Aorta (tissue), 5 donors: ENCODE measurements at regions of chr6 and their contacts with region 1.

Region 1: DNA sequence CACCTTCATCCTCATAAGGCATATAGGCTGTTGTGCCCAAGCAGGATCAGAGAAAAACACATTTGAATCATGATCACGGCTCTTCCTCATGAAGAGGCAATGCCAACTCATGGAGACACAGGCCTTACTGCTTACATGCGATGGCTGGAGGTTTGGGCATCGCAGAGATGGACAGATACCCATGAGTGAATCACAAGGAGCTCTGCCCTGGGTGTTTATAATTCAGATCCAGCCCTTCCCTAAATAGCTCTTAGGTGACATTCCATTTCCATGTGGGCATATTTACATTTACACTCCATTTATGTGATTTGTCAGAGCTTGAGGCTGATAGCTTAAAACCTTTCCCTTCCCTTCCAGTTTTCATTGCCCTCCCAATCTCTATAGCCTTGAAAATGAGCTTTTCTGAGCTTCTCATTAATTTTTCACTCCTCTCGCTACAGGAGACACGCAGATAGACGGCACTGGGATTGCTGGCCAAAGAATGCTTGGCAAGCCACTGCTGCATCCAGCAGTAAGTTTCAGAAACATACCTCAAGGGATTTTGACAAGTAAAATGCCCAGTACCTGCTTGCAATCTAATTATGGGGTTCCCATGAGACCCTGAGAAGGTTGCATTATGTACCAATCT is 249.1 kb downstream of the TBC1D7 start:
- DNase-seq: no peak
- ATAC-seq: peak; percentile 42
- H3K4me3 ChIP-seq: no peak overlapping the region
- H3K27ac ChIP-seq: peak overlapping the region; percentile 30 to 96
- H3K4me1 ChIP-seq: peaks cover 12 to 20% of the 10 kb centered on the region in 2 donors
- H3K27me3 ChIP-seq: no peaks in the 10 kb centered on the region

Region 2: GRCh38 chr6:12962987-12963386 is 116.2 kb before region 1 on chr6:
- intact Hi-C with region 1: loop called in 1 of 2 experiments (anchors 10 kb)
- DNase-seq: no peak
- ATAC-seq: no peak
- H3K4me3 ChIP-seq: no peak overlapping the region
- H3K27ac ChIP-seq: peak overlapping the region; percentile 38 to 87
- H3K4me1 ChIP-seq: peaks cover 2 to 11% of the 10 kb centered on the region in 2 donors
- H3K27me3 ChIP-seq: no peaks in the 10 kb centered on the region

Region 3: GRCh38 chr6:13026557-13026956 is 52.7 kb before region 1 on chr6:
- intact Hi-C with region 1: loop called in 1 of 2 experiments (anchors 10 kb)
- DNase-seq: no peak
- ATAC-seq: peak; percentile 56
- H3K4me3 ChIP-seq: peak overlapping the region in 1 of 2 donors; percentile 26
- H3K27ac ChIP-seq: peak overlapping the region; percentile 8 to 39
- H3K4me1 ChIP-seq: peaks cover 2 to 10% of the 10 kb centered on the region in 2 donors
- H3K27me3 ChIP-seq: no peaks in the 10 kb centered on the region

Region 4: DNA sequence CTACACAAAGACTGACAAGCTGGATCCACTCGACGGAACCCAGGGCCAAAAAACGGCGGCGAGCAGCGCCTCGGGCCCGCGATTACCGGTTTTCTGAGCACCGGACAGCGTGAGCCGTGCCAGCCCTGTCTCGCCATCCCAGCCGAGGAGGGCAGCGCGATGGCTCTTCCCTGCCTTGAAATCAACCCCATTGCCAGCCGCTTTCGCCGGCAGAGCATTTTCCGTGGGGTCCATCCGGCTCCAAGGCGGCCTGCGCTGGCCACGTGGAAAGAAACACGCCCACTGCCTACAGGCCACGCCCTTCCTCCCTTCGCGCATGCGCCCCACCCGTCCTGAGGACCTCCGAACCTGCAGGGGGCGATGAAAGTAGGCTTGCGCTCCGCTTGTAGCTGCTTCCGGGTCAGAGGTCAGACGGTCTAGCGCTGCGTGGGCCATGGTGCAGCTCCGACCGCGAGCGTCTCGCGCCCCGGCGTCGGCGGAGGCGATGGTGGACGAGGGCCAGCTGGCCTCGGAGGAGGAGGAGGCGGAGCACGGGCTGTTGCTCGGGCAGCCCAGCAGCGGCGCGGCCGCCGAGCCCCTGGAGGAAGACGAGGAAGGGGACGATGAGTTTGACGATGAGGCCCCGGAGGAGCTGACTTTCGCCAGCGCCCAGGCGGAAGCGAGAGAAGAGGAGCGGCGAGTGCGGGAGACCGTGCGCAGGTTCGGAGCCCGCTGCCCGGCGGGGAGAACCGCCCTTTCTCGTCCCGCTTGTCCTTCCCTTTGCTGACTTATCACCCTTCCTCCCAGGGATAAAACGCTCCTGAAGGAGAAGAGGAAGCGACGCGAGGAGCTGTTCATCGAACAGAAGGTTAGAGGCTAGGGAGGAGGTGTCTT is 536.0 kb after region 1 on chr6 and contains the start of gene NOL7:
- intact Hi-C with region 1: no loop called
- DNase-seq: peak; percentile 98 to 99
- ATAC-seq: peak; percentile 99
- H3K4me3 ChIP-seq: peak within 1 kb of the TSS; percentile 55 to 74
- H3K27ac ChIP-seq: peak within 1 kb of the TSS; percentile 78 to 80
- H3K4me1 ChIP-seq: peaks cover 0 to 3% of the 10 kb centered on the region in 2 donors
- H3K27me3 ChIP-seq: no peaks in the 10 kb centered on the region
- total RNA-seq, gene NOL7: 47.4 to 54.0 TPM